ENCODE measurements at regions of chr7 and their contacts with region 1.

Region 1: DNA sequence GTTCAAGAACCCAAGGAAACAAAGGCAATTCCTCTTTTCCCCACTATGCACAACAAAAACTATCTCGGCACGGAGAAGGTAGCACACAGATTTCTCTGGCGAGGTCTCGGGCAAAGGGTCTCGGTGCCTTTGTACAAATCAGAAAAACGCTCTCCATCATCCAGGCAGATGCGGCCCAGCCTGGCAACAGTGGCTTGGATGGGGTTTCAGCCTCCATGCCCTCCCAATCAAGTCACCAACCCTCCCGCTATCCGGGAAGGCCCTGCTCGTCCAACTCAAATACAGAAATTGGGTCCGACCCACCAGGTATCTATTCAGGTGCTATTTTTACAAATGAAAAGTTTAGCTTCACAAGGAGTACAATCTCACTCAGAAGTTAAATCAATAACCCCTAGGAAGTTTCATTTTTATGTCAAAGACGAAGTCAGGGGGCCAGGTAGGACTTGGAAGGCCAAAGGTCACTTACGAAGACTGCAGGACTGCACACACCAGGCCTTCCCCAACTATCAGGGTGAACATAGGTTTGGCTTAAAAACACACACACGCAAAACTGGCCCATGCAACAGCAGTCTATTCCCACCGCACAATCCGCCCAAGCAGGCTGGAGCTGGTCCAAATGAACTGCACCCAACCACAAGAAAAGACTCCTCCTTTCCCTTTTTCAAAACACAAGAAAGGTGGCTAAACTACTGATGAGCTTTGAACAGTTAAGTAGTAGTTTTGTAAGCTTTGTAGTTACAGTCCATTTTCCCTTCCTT is 43.0 kb downstream of the GNA12 start:
- DNase-seq: peak; percentile 68 to 89 (median 83)
- ATAC-seq: peak in 1 of 2 donors; percentile 3
- H3K4me3 ChIP-seq: no peak overlapping the region
- H3K27ac ChIP-seq: peak overlapping the region; percentile 56
- H3K4me1 ChIP-seq: peaks cover 11% of the 10 kb centered on the region
- H3K27me3 ChIP-seq: no peaks in the 10 kb centered on the region

Region 2: GRCh38 chr7:2760098-2760889 is 40.8 kb before region 1 on chr7:
- intact Hi-C with region 1: loop called in 1 of 4 experiments (anchors 5 kb)
- DNase-seq: peak; percentile 59 to 80 (median 77)
- ATAC-seq: peak; percentile 50 to 69
- H3K4me3 ChIP-seq: no peak overlapping the region
- H3K27ac ChIP-seq: peak overlapping the region; percentile 68
- H3K4me1 ChIP-seq: peaks cover 20% of the 10 kb centered on the region
- H3K27me3 ChIP-seq: no peaks in the 10 kb centered on the region

Region 3: DNA sequence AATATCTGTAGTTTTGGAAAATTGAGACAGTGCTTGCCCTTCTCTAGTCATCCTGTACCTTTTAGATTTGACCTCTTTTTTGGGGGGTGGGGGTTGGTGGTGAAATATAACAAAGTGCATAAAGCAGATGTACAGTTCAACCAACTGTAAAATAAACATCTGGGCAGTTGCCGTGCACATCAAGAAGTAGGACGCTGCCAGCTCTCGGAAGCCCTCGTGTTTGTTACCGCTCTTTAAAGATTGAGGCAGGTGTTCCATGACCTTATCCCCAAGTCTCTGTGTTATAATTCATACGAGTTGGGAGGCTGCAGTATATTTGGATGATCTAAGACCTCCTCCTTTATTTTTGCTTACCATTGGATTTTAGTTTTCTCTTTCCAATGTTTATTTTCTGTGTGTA is 555.1 kb after region 1 on chr7:
- intact Hi-C with region 1: no loop called
- DNase-seq: no peak
- ATAC-seq: no peak
- H3K4me3 ChIP-seq: no peak overlapping the region
- H3K27ac ChIP-seq: no peak overlapping the region
- H3K4me1 ChIP-seq: no peaks in the 10 kb centered on the region
- H3K27me3 ChIP-seq: no peaks in the 10 kb centered on the region

Measured in right cardiac atrium (tissue), 5 donors.